ENCODE measurements at regions of chr17 and their contacts with region 1.

Region 1: DNA sequence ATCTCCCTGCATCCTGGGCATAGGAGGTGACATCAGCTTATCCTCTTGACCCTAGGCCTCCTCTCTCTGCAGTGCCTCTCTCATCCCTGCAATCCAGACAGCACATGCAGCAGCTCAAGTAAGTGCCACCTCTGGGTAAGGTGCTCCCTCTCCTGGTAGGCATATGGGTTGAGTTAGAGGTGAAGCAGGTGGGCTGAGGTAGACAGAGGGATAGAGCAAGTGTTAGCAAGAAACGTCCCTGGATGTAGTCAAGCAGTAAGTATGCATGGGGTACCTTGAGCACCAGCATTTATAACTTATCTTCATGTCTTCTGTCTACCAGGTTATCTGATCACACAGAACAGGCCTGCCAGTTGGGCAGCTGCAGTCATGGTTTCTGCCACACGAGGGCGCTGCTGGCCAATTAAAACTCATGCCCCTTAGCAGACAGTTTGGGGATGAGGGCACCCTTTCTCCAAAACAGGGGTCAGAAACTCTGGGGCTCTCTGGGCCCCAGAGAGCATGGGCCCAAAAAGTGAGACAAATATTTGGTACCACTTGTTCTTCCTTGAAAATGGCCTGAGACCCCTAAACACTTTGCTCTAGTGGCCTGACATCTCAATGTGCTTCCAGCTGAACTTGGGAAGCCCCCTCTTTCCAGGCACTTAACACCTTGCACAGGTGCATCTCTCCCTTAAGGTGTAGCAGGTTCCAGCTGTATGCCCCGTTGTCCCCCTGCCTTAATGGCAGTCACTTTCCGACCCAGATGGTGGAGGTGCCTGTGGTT is 59.8 kb downstream of the NEUROD2 start:
- H3K4me3 ChIP-seq: no peak overlapping the region
- H3K27ac ChIP-seq: no peak overlapping the region
- H3K4me1 ChIP-seq: no peaks in the 10 kb centered on the region
- CTCF ChIP-seq: peak; percentile 95

Region 2: GRCh38 chr17:39408360-39408759 is 139.5 kb before region 1 on chr17:
- CTCF ChIA-PET with region 1: no interaction called
- POLR2A ChIA-PET with region 1: no interaction called
- H3K4me3 ChIP-seq: no peak overlapping the region
- H3K27ac ChIP-seq: no peak overlapping the region
- H3K4me1 ChIP-seq: no peaks in the 10 kb centered on the region
- CTCF ChIP-seq: no peak

Region 3: DNA sequence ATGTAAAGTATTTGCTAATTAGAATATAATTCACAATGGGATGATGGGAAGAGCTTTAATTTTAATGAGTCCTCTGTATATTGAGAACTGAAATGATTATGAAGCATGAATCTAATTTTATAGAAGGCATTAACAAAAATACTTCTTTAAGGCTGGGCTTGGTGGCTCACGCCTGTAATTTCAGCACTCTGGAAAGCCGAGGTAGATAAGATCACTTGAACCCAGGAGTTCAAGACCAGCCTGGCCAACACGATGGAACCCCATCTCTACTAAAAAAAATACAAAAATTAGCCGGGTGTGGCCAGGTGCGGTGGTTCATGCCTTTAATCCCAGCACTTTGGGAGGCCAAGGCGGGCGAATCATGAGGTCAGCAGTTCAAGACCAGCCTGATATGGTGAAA is 74.6 kb before region 1 on chr17:
- CTCF ChIA-PET with region 1: no interaction called
- POLR2A ChIA-PET with region 1: no interaction called
- H3K4me3 ChIP-seq: no peak overlapping the region
- H3K27ac ChIP-seq: no peak overlapping the region
- H3K4me1 ChIP-seq: no peaks in the 10 kb centered on the region
- CTCF ChIP-seq: no peak

Region 4: GRCh38 chr17:39563476-39563875 is 15.6 kb after region 1 on chr17:
- CTCF ChIA-PET with region 1: interaction called, 33 read pairs
- POLR2A ChIA-PET with region 1: no interaction called
- H3K4me3 ChIP-seq: no peak overlapping the region
- H3K27ac ChIP-seq: no peak overlapping the region
- H3K4me1 ChIP-seq: no peaks in the 10 kb centered on the region
- CTCF ChIP-seq: no peak

Region 5: GRCh38 chr17:39636927-39637736 is 89.2 kb after region 1 on chr17 and contains the start of gene STARD3:
- CTCF ChIA-PET with region 1: interaction called, 15 read pairs
- POLR2A ChIA-PET with region 1: no interaction called
- H3K4me3 ChIP-seq: peak within 1 kb of the TSS; percentile 88
- H3K27ac ChIP-seq: peak within 1 kb of the TSS; percentile 76
- H3K4me1 ChIP-seq: peaks cover 25% of the 10 kb centered on the region
- CTCF ChIP-seq: peak; percentile 90

Region 6: GRCh38 chr17:39668199-39668966 is 120.5 kb after region 1 on chr17 and contains the start of gene PNMT:
- CTCF ChIA-PET with region 1: interaction called, 14 read pairs
- POLR2A ChIA-PET with region 1: no interaction called
- H3K4me3 ChIP-seq: peak within 1 kb of the TSS; percentile 34
- H3K27ac ChIP-seq: peak within 1 kb of the TSS; percentile 69; the same call in 1 of the 2 replicates
- H3K4me1 ChIP-seq: peaks cover 6% of the 10 kb centered on the region
- CTCF ChIP-seq: peak; percentile 96

Measured in HEK293 (cell line).